Breast epithelium (tissue), 4 donors: ENCODE measurements at regions of chr7 and their contacts with region 1.

Region 1: DNA sequence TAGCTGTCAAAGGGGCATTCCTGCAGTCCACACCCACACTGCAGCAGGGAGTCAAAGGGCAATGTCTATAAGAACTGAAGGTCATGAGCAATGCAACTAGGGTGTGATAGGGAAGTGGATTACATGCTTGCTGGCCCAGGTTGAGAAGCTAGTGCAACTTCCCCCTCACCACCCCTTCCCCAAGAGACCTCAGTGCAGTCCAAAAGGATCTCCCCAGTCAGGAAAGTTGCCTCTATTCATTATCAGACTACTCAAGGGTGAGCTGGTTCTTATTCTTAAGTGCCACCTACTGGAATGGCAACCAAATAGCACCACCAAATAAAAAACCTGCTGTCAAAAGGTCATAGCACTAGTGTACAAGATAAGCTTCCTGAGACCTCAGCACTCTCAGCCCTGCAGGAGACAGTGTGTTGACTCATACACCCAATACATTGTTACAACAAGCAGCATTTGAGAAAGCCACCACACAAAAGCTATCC is 28.2 kb downstream of the MTERF1 start:
- DNase-seq: no peak
- H3K4me3 ChIP-seq: no peak overlapping the region
- H3K27ac ChIP-seq: no peak overlapping the region
- H3K4me1 ChIP-seq: no peaks in the 10 kb centered on the region
- H3K27me3 ChIP-seq: no peaks in the 10 kb centered on the region
- CTCF ChIP-seq: no peak
- POLR2A ChIP-seq: no peak

Region 2: GRCh38 chr7:91151916-91152315 is 700.4 kb before region 1 on chr7:
- intact Hi-C with region 1: loop called (anchors 5 kb)
- DNase-seq: no peak
- H3K4me3 ChIP-seq: no peak overlapping the region
- H3K27ac ChIP-seq: no peak overlapping the region
- H3K4me1 ChIP-seq: no peaks in the 10 kb centered on the region
- H3K27me3 ChIP-seq: no peaks in the 10 kb centered on the region
- CTCF ChIP-seq: no peak
- POLR2A ChIP-seq: no peak